Naive thymus-derived CD4-positive, alpha-beta T cell (primary cell): ENCODE measurements at regions of chr2 and their contacts with region 1.

Region 1: GRCh38 chr2:229921892-229922445 is at the start of gene TRIP12:
- DNase-seq: peak; percentile 87 to 97 (median 95)
- ATAC-seq: peak; percentile 88
- H3K4me3 ChIP-seq: peak within 1 kb of the TSS; percentile 99
- H3K4me3 Mint-ChIP-seq: peak within 1 kb of the TSS; percentile 85 to 99 (median 96)
- H3K27ac ChIP-seq: peak within 1 kb of the TSS; percentile 98
- H3K27ac Mint-ChIP-seq: peak within 1 kb of the TSS; percentile 93 to 100 (median 98)
- H3K4me1 ChIP-seq: peaks cover 18 to 35% of the 10 kb centered on the region in 2 donors
- H3K4me1 Mint-ChIP-seq: peaks cover 30 to 62% (median 49%) of the 10 kb centered on the region in 7 donors
- H3K27me3 ChIP-seq: no peaks in the 10 kb centered on the region
- H3K27me3 Mint-ChIP-seq: no peaks in the 10 kb centered on the region
- total RNA-seq, gene TRIP12: 184 to 247 (median 231) TPM

Region 2: GRCh38 chr2:229825476-229825875 is 96.5 kb before region 1 on chr2:
- CTCF ChIA-PET with region 1: interaction called, 3 read pairs
- POLR2A ChIA-PET with region 1: no interaction called
- intact Hi-C with region 1: loop called in 1 of 2 experiments (anchors 1 kb)
- DNase-seq: no peak
- ATAC-seq: no peak
- H3K4me3 ChIP-seq: no peak overlapping the region
- H3K4me3 Mint-ChIP-seq: no peak overlapping the region
- H3K27ac ChIP-seq: no peak overlapping the region
- H3K27ac Mint-ChIP-seq: peak overlapping the region in 5 of 9 donors; percentile 12 to 74 (median 40)
- H3K4me1 ChIP-seq: no peaks in the 10 kb centered on the region
- H3K4me1 Mint-ChIP-seq: peaks cover 8 to 23% (median 18%) of the 10 kb centered on the region in 7 donors
- H3K27me3 ChIP-seq: no peaks in the 10 kb centered on the region
- H3K27me3 Mint-ChIP-seq: no peaks in the 10 kb centered on the region

Region 3: DNA sequence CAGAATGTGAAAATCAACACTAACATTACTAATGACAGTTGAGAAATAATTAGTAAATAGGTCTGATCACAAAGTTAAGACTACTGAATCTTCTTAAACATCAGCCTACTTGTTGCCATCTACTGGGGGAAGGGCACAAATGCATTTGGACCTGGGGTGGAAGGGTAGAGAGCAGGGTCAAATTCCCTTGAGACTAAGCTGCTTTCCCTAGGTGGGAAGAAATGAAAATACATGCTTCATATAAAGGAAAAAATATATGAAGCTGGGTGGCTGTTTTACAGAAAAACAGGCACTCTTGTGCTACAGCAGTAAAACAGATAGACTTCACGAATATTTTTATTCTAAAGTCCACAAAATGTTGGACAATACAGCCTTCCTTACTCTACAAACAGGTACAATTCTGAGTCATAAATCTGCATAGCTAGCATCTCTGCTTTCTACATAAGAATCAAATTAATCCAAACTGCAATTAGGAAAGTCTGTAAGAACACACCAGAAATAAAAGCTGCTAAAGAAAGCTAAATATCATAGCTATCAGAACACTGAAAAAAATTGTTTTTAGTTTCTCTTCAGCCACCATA is 11.0 kb before region 1 on chr2:
- CTCF ChIA-PET with region 1: interaction called, 6 read pairs
- POLR2A ChIA-PET with region 1: interaction called, 8 read pairs
- intact Hi-C with region 1: loop called in 1 of 2 experiments (anchors 1 kb)
- DNase-seq: peak in 6 of 9 donors; percentile 10 to 36 (median 28)
- ATAC-seq: peak; percentile 79
- H3K4me3 ChIP-seq: no peak overlapping the region
- H3K4me3 Mint-ChIP-seq: peak overlapping the region in 7 of 10 donors; percentile 8 to 65 (median 14)
- H3K27ac ChIP-seq: peak overlapping the region; percentile 12
- H3K27ac Mint-ChIP-seq: peak overlapping the region; percentile 5 to 84 (median 56)
- H3K4me1 ChIP-seq: peaks cover 13 to 31% of the 10 kb centered on the region in 2 donors
- H3K4me1 Mint-ChIP-seq: peaks cover 35 to 68% (median 59%) of the 10 kb centered on the region in 7 donors
- H3K27me3 ChIP-seq: no peaks in the 10 kb centered on the region
- H3K27me3 Mint-ChIP-seq: no peaks in the 10 kb centered on the region

Region 4: DNA sequence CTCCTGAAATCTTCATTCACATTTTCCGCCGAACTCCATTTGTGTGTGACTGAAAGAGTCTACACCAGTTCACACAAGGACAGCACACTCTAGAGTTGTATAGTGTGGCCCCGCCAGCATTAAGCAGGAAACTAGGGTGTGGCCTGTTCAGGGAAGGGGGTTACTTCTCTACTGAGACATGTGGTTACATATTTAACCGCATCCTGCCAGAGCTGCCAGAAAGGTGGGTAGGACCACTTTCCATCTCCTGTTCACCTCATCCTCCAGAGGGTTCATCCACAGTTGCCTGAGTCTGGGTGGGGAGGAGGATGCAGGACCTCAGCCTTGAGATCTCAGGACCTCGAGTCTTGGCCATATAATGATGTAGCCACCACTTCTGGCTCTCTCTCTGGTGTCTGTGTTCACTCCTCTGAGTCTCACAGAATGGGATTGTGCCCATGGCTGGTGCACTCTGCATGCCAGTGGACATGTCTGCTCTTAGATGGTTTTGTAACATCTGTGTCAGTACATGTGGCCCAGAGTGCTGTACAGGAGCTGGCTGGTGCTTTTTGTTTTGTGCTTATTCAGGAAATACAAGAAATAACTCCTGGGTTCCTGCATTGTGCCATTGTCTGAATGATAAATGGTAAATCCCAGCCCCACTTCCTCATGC is 397.4 kb after region 1 on chr2:
- CTCF ChIA-PET with region 1: no interaction called
- POLR2A ChIA-PET with region 1: no interaction called
- intact Hi-C with region 1: loop called in 1 of 2 experiments (anchors 5 kb)
- DNase-seq: peak in 8 of 9 donors; percentile 56 to 94 (median 90)
- ATAC-seq: peak; percentile 96
- H3K4me3 ChIP-seq: peak overlapping the region; percentile 34
- H3K4me3 Mint-ChIP-seq: peak overlapping the region; percentile 54 to 85 (median 77)
- H3K27ac ChIP-seq: peak overlapping the region; percentile 72
- H3K27ac Mint-ChIP-seq: peak overlapping the region; percentile 85 to 96 (median 91)
- H3K4me1 ChIP-seq: peaks cover 49 to 63% of the 10 kb centered on the region in 2 donors
- H3K4me1 Mint-ChIP-seq: peaks cover 47 to 89% (median 83%) of the 10 kb centered on the region in 7 donors
- H3K27me3 ChIP-seq: no peaks in the 10 kb centered on the region
- H3K27me3 Mint-ChIP-seq: no peaks in the 10 kb centered on the region

Region 5: GRCh38 chr2:230712443-230713330 is 790.7 kb after region 1 on chr2 and contains the start of gene CAB39:
- CTCF ChIA-PET with region 1: no interaction called
- POLR2A ChIA-PET with region 1: no interaction called
- intact Hi-C with region 1: loop called (anchors 2 to 5 kb)
- DNase-seq: peak; percentile 82 to 94 (median 90)
- ATAC-seq: peak; percentile 96
- H3K4me3 ChIP-seq: peak within 1 kb of the TSS; percentile 92
- H3K4me3 Mint-ChIP-seq: peak within 1 kb of the TSS; percentile 91 to 99 (median 98)
- H3K27ac ChIP-seq: peak within 1 kb of the TSS; percentile 91
- H3K27ac Mint-ChIP-seq: peak within 1 kb of the TSS; percentile 92 to 98 (median 97)
- H3K4me1 ChIP-seq: peaks cover 27 to 35% of the 10 kb centered on the region in 2 donors
- H3K4me1 Mint-ChIP-seq: peaks cover 31 to 53% (median 50%) of the 10 kb centered on the region in 7 donors
- H3K27me3 ChIP-seq: no peaks in the 10 kb centered on the region
- H3K27me3 Mint-ChIP-seq: no peaks in the 10 kb centered on the region
- total RNA-seq, gene CAB39: 71.0 to 186 (median 95.4) TPM

Region 6: DNA sequence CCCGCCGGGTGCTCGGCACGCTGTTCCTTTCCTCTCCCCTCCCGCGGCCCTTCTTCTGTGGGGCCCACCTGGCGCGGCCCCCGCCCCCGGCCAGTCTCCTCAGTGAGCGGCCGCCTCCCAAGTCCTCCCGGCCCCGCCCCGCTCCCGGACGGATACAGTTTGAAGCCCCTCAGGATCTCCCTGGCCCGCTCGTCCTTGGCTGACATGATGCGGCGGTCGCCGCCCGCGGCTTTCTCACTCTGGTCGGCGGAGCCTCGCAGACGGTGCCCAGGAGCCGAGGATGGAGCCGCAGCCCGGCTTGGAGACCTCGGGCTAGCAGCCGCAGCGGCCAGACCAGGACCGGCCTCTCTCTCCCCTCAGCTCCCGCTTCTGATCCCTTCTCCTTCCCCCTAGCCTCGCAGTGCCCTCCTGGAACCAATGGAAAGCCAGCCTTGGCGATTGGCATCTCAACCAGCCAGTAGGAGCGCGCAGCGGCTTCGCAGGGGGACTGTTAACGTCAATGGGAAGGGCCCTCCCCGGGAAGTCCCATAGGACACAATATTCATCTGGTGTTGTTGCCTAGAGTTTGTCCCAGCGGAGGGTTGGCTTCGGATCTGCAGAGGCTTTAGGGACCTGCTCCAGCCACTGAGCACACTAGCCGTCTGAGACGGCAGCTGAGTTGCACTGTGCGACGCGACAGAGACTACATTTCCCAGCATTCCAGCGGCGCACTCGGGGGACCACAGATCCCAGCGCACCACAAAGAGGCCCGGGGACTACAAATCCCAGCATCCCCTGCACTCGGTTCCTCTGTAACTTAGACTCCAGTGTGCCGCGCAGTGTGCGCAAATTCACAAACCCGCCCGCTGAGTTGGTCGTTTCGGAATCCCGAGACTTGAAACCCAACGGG is 1859.2 kb after region 1 on chr2 and contains the start of gene PDE6D:
- CTCF ChIA-PET with region 1: no interaction called
- POLR2A ChIA-PET with region 1: no interaction called
- intact Hi-C with region 1: loop called in 1 of 2 experiments (anchors 1 kb)
- DNase-seq: peak; percentile 90 to 98 (median 94)
- ATAC-seq: peak; percentile 94
- H3K4me3 ChIP-seq: peak within 1 kb of the TSS; percentile 100
- H3K4me3 Mint-ChIP-seq: peak within 1 kb of the TSS; percentile 85 to 99 (median 98)
- H3K27ac ChIP-seq: peak within 1 kb of the TSS; percentile 82
- H3K27ac Mint-ChIP-seq: peak within 1 kb of the TSS; percentile 90 to 98 (median 94)
- H3K4me1 ChIP-seq: peaks cover 26 to 30% of the 10 kb centered on the region in 2 donors
- H3K4me1 Mint-ChIP-seq: peaks cover 45 to 76% (median 57%) of the 10 kb centered on the region in 7 donors
- H3K27me3 ChIP-seq: no peaks in the 10 kb centered on the region
- H3K27me3 Mint-ChIP-seq: peaks cover 0 to 5% (median 0%) of the 10 kb centered on the region in 5 donors
- total RNA-seq, gene PDE6D: 14.3 to 35.7 (median 25.2) TPM